Tibial artery (tissue), 4 donors: ENCODE measurements at regions of chr6 and their contacts with region 1.

Region 1: GRCh38 chr6:52664186-52664990 is 6.5 kb upstream of the TMEM14A start:
- DNase-seq: peak; percentile 88 to 95
- H3K4me3 ChIP-seq: peak overlapping the region; percentile 79 to 86
- H3K27ac ChIP-seq: peak overlapping the region; percentile 81 to 91
- H3K4me1 ChIP-seq: peaks cover 0 to 21% (median 11%) of the 10 kb centered on the region in 4 donors
- H3K27me3 ChIP-seq: no peaks in the 10 kb centered on the region
- CTCF ChIP-seq: no peak

Region 2: GRCh38 chr6:52284460-52285176 is 379.8 kb before region 1 on chr6 and contains the start of gene MCM3:
- intact Hi-C with region 1: loop called (anchors 5 kb)
- DNase-seq: peak; percentile 98 to 99
- H3K4me3 ChIP-seq: peak within 1 kb of the TSS; percentile 69 to 88
- H3K27ac ChIP-seq: peak within 1 kb of the TSS; percentile 60 to 67
- H3K4me1 ChIP-seq: peaks cover 0 to 14% (median 8%) of the 10 kb centered on the region in 4 donors
- H3K27me3 ChIP-seq: no peaks in the 10 kb centered on the region
- CTCF ChIP-seq: peak; percentile 17 to 22

Region 3: GRCh38 chr6:52419809-52420670 is 244.3 kb before region 1 on chr6 and contains the start of gene EFHC1:
- intact Hi-C with region 1: loop called (anchors 2 kb)
- DNase-seq: peak; percentile 98 to 99
- H3K4me3 ChIP-seq: peak within 1 kb of the TSS; percentile 65 to 84
- H3K27ac ChIP-seq: peak within 1 kb of the TSS; percentile 84
- H3K4me1 ChIP-seq: peaks cover 0 to 33% (median 18%) of the 10 kb centered on the region in 4 donors
- H3K27me3 ChIP-seq: no peaks in the 10 kb centered on the region
- CTCF ChIP-seq: peak in 1 of 2 experiments; percentile 4

Region 4: DNA sequence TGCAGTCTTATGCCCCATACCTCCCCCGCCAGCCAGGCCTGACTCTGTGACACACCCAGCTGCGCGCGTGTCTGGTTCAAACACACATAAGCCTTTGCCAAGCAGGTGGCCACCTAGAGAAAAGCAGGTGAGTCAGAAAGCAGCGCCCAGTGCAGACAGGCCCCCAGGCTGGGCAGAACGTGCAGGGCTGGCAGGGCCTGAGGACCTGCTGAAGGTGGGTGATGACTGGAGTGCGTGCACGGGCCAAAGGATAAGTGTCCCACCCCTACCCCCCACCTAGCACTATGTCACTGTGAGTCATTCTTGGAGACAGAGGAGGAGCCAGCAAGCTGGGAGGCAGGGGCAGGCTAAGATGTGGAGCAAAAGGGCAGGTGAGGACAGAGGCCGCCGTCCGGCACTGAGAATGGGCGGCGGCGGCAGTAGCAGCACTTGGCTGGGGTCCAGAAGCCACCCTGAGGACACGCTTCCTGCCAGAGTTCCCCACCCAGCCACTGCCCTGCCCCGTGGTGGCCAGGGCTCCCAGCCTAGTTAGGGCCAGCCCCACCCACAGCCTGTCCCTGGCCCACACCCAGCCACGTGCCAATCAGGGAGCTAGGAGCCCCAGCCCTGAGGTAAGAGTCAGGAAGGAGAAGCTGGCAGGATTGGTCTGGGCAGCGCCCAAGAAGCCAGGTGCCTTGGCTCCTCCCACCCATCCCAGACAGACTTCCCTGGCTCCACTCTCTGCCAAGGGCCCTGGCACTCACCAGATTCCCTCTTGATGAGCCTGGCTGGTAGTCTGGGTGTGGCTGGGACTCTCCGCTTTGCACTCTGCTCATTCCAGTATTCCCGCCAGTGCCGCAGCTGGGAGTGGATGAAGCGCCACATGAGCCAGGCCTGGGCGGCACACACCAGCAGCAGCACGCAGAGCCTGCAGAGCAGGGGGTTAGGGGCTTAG is 160.3 kb before region 1 on chr6:
- intact Hi-C with region 1: loop called (anchors 10 kb)
- DNase-seq: peak; percentile 92 to 98
- H3K4me3 ChIP-seq: peak overlapping the region in 1 of 2 donors; percentile 4
- H3K27ac ChIP-seq: peak overlapping the region; percentile 68 to 84
- H3K4me1 ChIP-seq: peaks cover 4 to 62% (median 52%) of the 10 kb centered on the region in 4 donors
- H3K27me3 ChIP-seq: no peaks in the 10 kb centered on the region
- CTCF ChIP-seq: peak in 1 of 2 experiments; percentile 8

Region 5: DNA sequence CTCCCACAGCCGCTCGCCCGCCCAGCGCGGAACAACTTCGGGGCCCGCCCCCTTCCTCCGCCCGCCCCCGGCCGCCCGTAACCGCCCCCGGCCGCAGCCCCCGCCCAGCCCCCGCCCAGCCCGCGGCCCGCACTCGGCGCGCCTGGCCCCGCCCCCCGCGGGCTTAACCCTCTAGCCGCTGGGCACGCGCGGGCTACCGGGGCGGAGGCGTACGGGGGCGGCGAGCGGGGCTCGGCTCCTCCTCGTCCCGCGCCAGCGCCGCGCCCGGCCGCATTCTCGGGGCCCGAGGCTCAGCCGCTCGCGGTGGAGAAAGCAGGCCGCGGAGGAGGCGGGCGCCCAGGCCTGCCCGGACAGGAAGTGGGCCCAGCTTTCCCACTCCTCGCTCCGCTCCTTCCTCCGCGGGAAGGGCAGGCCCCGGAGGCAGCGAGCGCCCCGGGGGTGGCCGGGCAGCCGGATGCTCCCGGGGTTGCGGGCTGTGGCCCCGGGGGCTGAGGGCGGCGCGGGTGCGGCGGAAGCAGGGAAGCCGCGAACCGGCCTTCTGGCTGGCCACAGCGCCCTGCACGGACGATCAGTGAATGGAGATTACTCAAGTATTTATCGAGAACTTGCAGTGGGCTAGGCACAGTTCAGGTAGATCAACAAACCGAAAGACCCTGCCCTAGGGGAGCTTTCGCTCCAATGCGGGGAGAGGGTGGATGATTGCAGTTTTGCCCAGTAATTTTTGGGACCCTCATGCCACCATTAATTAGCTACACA is 87.2 kb before region 1 on chr6 and contains the start of gene TRAM2:
- intact Hi-C with region 1: loop called (anchors 5 kb)
- DNase-seq: peak; percentile 72 to 90
- H3K4me3 ChIP-seq: peak within 1 kb of the TSS; percentile 70 to 94
- H3K27ac ChIP-seq: peak within 1 kb of the TSS; percentile 98 to 99
- H3K4me1 ChIP-seq: peaks cover 0 to 45% (median 34%) of the 10 kb centered on the region in 4 donors
- H3K27me3 ChIP-seq: no peaks in the 10 kb centered on the region
- CTCF ChIP-seq: peak; percentile 20 to 24

Region 6: DNA sequence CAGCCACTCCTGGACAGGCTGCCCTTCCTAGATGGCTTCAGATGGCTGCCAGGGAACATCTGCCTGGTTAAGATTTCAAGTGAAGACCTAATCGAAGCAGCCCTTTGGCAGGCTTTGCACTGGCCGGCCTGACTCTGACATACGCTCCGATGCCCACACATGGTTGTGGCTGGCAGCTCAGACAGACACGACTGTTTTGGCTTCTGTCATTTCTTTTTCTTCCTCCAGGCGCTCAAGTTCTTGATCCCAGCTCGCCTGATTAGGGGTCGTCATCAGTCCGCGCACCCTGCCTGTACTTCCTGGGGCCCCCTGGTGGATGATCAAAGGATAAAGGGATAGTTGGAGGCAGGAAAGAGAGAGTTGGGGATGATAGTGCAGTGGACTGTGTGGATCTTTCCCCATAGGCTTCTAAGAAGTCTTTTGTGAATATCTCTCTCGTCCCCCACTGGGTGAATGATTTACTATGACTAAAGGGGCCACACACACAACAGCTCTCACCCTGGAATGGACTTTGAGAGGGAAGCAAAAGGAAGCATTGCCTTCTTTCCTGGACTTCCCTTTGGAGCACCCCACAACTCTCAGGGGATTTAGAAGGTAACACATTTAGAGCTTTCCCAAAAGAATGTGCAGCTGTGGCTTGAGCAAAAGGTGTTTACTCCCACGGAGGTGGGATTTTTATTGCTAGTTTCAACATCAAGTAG is 66.1 kb before region 1 on chr6:
- intact Hi-C with region 1: loop called (anchors 5 kb)
- DNase-seq: peak; percentile 66 to 76
- H3K4me3 ChIP-seq: peak overlapping the region in 1 of 2 donors; percentile 23
- H3K27ac ChIP-seq: peak overlapping the region; percentile 80 to 85
- H3K4me1 ChIP-seq: peaks cover 0 to 49% (median 37%) of the 10 kb centered on the region in 4 donors
- H3K27me3 ChIP-seq: no peaks in the 10 kb centered on the region
- CTCF ChIP-seq: peak; percentile 73 to 82